CD4-positive, alpha-beta memory T cell (primary cell): ENCODE measurements at regions of chr16 and their contacts with region 1.

Region 1: GRCh38 chr16:88569985-88570690 is at the start of gene ZC3H18:
- DNase-seq: peak; percentile 93 to 96 (median 96)
- H3K4me3 ChIP-seq: peak within 1 kb of the TSS; percentile 54 to 84
- H3K4me3 Mint-ChIP-seq: peak within 1 kb of the TSS; percentile 85 to 91 (median 90)
- H3K27ac ChIP-seq: peak within 1 kb of the TSS; percentile 76
- H3K27ac Mint-ChIP-seq: peak within 1 kb of the TSS; percentile 87 to 95 (median 90)
- H3K4me1 ChIP-seq: peaks cover 24% of the 10 kb centered on the region
- H3K4me1 Mint-ChIP-seq: peaks cover 14 to 40% (median 26%) of the 10 kb centered on the region in 4 donors
- H3K27me3 ChIP-seq: no peaks in the 10 kb centered on the region
- H3K27me3 Mint-ChIP-seq: no peaks in the 10 kb centered on the region
- total RNA-seq, gene ZC3H18: 84.5 to 91.5 TPM

Region 2: GRCh38 chr16:87950765-87951549 is 619.2 kb before region 1 on chr16 and contains the start of gene BANP:
- CTCF ChIA-PET with region 1: no interaction called
- POLR2A ChIA-PET with region 1: no interaction called
- intact Hi-C with region 1: loop called (anchors 1 kb)
- DNase-seq: peak; percentile 98 to 99 (median 99)
- H3K4me3 ChIP-seq: peak within 1 kb of the TSS; percentile 89 to 90
- H3K4me3 Mint-ChIP-seq: peak within 1 kb of the TSS; percentile 97 to 100 (median 99)
- H3K27ac ChIP-seq: peak within 1 kb of the TSS; percentile 74
- H3K27ac Mint-ChIP-seq: peak within 1 kb of the TSS; percentile 98 to 100 (median 100)
- H3K4me1 ChIP-seq: peaks cover 43% of the 10 kb centered on the region
- H3K4me1 Mint-ChIP-seq: peaks cover 23 to 49% (median 39%) of the 10 kb centered on the region in 4 donors
- H3K27me3 ChIP-seq: no peaks in the 10 kb centered on the region
- H3K27me3 Mint-ChIP-seq: peaks cover 0 to 2% of the 10 kb centered on the region in 2 donors
- total RNA-seq, gene BANP: 61.8 to 72.7 TPM

Region 3: GRCh38 chr16:88461331-88462269 is 108.5 kb before region 1 on chr16:
- CTCF ChIA-PET with region 1: no interaction called
- POLR2A ChIA-PET with region 1: no interaction called
- intact Hi-C with region 1: no loop called
- DNase-seq: peak in 1 of 5 donors; percentile 15
- H3K4me3 ChIP-seq: no peak overlapping the region
- H3K4me3 Mint-ChIP-seq: peak overlapping the region in 3 of 8 donors; percentile 44 to 55 (median 46)
- H3K27ac ChIP-seq: no peak overlapping the region
- H3K27ac Mint-ChIP-seq: peak overlapping the region in 3 of 7 donors; percentile 37 to 83 (median 48)
- H3K4me1 ChIP-seq: peaks cover 91% of the 10 kb centered on the region
- H3K4me1 Mint-ChIP-seq: peaks cover 19 to 84% (median 52%) of the 10 kb centered on the region in 4 donors
- H3K27me3 ChIP-seq: no peaks in the 10 kb centered on the region
- H3K27me3 Mint-ChIP-seq: no peaks in the 10 kb centered on the region

Region 4: GRCh38 chr16:88582912-88583575 is 12.9 kb after region 1 on chr16:
- CTCF ChIA-PET with region 1: interaction called, 3 read pairs
- POLR2A ChIA-PET with region 1: interaction called, 11 read pairs
- intact Hi-C with region 1: no loop called
- DNase-seq: no peak
- H3K4me3 ChIP-seq: no peak overlapping the region
- H3K4me3 Mint-ChIP-seq: peak overlapping the region in 4 of 8 donors; percentile 10 to 59 (median 30)
- H3K27ac ChIP-seq: no peak overlapping the region
- H3K27ac Mint-ChIP-seq: peak overlapping the region in 2 of 7 donors; percentile 35 to 83
- H3K4me1 ChIP-seq: peaks cover 24% of the 10 kb centered on the region
- H3K4me1 Mint-ChIP-seq: peaks cover 17 to 76% (median 39%) of the 10 kb centered on the region in 4 donors
- H3K27me3 ChIP-seq: no peaks in the 10 kb centered on the region
- H3K27me3 Mint-ChIP-seq: no peaks in the 10 kb centered on the region

Region 5: DNA sequence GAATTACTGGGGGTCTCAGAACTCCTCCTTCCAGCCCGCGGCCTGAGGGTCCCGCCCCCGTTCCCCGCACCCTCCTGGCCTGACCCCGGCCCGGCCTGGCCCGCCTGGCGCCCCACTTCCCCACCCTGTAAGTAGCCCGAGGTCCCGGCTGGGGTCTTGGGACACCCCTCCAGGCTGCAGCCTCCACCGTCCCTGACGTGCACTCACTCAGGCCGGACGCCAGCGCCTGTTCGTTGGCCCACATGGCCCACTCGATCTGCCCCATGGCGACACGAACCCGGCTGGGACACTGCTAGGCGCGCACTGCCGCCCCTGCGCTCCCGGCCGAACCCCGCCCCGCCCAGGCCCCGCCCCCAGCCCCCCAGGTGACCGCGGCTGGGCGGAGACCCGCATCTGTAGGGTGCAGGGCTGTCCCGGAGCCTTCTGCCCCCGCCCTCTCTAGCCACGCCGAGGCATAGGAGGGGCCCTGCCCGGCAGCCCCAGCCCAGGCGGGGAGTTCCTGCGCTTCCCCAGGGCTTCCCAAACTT is 80.7 kb after region 1 on chr16 and contains the start of gene CYBA:
- CTCF ChIA-PET with region 1: no interaction called
- POLR2A ChIA-PET with region 1: interaction called, 8 read pairs
- intact Hi-C with region 1: loop called (anchors 1 kb)
- DNase-seq: peak; percentile 81 to 87 (median 84)
- H3K4me3 ChIP-seq: peak within 1 kb of the TSS; percentile 76 to 91
- H3K4me3 Mint-ChIP-seq: peak within 1 kb of the TSS; percentile 89 to 93 (median 91)
- H3K27ac ChIP-seq: peak within 1 kb of the TSS; percentile 91
- H3K27ac Mint-ChIP-seq: peak within 1 kb of the TSS; percentile 93 to 97 (median 95)
- H3K4me1 ChIP-seq: peaks cover 28% of the 10 kb centered on the region
- H3K4me1 Mint-ChIP-seq: peaks cover 7 to 26% (median 12%) of the 10 kb centered on the region in 4 donors
- H3K27me3 ChIP-seq: no peaks in the 10 kb centered on the region
- H3K27me3 Mint-ChIP-seq: no peaks in the 10 kb centered on the region
- total RNA-seq, gene CYBA: 383 to 386 TPM

Region 6: GRCh38 chr16:88662843-88663606 is 92.9 kb after region 1 on chr16 and contains the start of gene MVD:
- CTCF ChIA-PET with region 1: no interaction called
- POLR2A ChIA-PET with region 1: interaction called, 4 read pairs
- intact Hi-C with region 1: loop called (anchors 1 kb)
- DNase-seq: peak; percentile 93 to 96 (median 95)
- H3K4me3 ChIP-seq: peak within 1 kb of the TSS; percentile 65 to 95
- H3K4me3 Mint-ChIP-seq: peak within 1 kb of the TSS; percentile 91 to 95 (median 94)
- H3K27ac ChIP-seq: peak within 1 kb of the TSS; percentile 83
- H3K27ac Mint-ChIP-seq: peak within 1 kb of the TSS; percentile 80 to 98 (median 97)
- H3K4me1 ChIP-seq: peaks cover 16% of the 10 kb centered on the region
- H3K4me1 Mint-ChIP-seq: peaks cover 11 to 22% (median 15%) of the 10 kb centered on the region in 4 donors
- H3K27me3 ChIP-seq: no peaks in the 10 kb centered on the region
- H3K27me3 Mint-ChIP-seq: no peaks in the 10 kb centered on the region
- total RNA-seq, gene MVD: 49.2 to 57.0 TPM

Region 7: GRCh38 chr16:88706288-88706964 is 136.3 kb after region 1 on chr16 and contains the starts of genes CTU2 and RNF166:
- CTCF ChIA-PET with region 1: interaction called, 3 read pairs
- POLR2A ChIA-PET with region 1: interaction called, 25 read pairs
- intact Hi-C with region 1: loop called (anchors 1 kb)
- DNase-seq: peak; percentile 90 to 94 (median 91)
- H3K4me3 ChIP-seq: peak within 1 kb of the TSS; percentile 95 to 98
- H3K4me3 Mint-ChIP-seq: peak within 1 kb of the TSS; percentile 93 to 96 (median 96)
- H3K27ac ChIP-seq: peak within 1 kb of the TSS; percentile 85
- H3K27ac Mint-ChIP-seq: peak within 1 kb of the TSS; percentile 97 to 99 (median 98)
- H3K4me1 ChIP-seq: peaks cover 50% of the 10 kb centered on the region
- H3K4me1 Mint-ChIP-seq: peaks cover 20 to 62% (median 39%) of the 10 kb centered on the region in 4 donors
- H3K27me3 ChIP-seq: no peaks in the 10 kb centered on the region
- H3K27me3 Mint-ChIP-seq: no peaks in the 10 kb centered on the region
- total RNA-seq, gene CTU2: 20.4 to 21.1 TPM
- total RNA-seq, gene RNF166: 129 to 137 TPM

Region 8: DNA sequence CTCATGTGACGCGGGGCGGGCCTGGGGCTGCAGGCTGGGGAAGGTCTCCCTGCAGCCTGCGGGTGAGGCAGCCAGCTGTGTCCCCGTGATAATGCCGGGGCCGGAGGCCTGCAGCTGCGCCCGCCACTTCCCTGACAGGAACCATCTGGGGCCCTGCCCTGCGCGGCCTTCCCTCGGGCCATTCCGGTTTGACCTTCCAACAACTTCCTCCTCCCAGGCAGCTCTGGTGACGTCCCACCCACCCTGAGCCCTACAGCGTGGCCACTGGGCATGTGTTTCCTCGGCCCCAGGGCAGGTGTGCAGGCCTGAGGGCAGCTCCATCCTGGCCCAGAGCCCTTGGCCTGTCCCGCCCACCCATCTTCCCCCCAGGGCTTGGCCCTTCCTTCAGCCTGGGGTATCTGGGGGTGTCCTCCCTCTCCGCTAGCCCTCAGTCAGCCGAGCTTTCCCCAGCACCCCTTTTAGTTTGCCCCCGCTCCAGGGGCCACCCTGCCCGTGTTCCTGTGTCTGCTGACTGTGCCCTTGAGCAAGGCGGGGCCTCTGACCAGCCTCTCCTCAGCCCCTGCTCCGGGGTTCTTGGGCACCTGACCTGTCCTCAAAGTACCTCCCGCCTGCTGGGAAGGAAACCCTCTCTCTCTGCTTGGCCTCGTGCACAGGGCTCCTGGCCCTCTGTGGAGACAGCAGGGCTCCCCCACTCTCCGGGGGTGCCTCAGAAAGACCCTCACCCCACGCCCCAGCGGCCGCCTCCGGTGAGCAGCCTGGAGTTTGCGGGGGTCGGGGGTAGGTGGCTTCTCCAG is 407.1 kb after region 1 on chr16 and contains the start of gene CBFA2T3:
- CTCF ChIA-PET with region 1: no interaction called
- POLR2A ChIA-PET with region 1: no interaction called
- intact Hi-C with region 1: no loop called
- DNase-seq: no peak
- H3K4me3 ChIP-seq: no peak within 1 kb of the TSS
- H3K4me3 Mint-ChIP-seq: no peak within 1 kb of the TSS
- H3K27ac ChIP-seq: no peak within 1 kb of the TSS
- H3K27ac Mint-ChIP-seq: peak within 1 kb of the TSS in 1 of 7 donors; percentile 22
- H3K4me1 ChIP-seq: no peaks in the 10 kb centered on the region
- H3K4me1 Mint-ChIP-seq: peaks cover 0 to 5% (median 3%) of the 10 kb centered on the region in 4 donors
- H3K27me3 ChIP-seq: peaks cover 16% of the 10 kb centered on the region
- H3K27me3 Mint-ChIP-seq: peaks cover 15 to 21% of the 10 kb centered on the region in 2 donors
- total RNA-seq, gene CBFA2T3: 0.11 TPM in 1 of 2 experiments, not detected in the other

Region 9: GRCh38 chr16:89217388-89218191 is 647.5 kb after region 1 on chr16 and contains the start of gene ZNF778:
- CTCF ChIA-PET with region 1: no interaction called
- POLR2A ChIA-PET with region 1: interaction called, 7 read pairs
- intact Hi-C with region 1: loop called (anchors 1 kb)
- DNase-seq: peak; percentile 83 to 87 (median 85)
- H3K4me3 ChIP-seq: peak within 1 kb of the TSS; percentile 76 to 91
- H3K4me3 Mint-ChIP-seq: peak within 1 kb of the TSS; percentile 73 to 94 (median 92)
- H3K27ac ChIP-seq: peak within 1 kb of the TSS; percentile 94
- H3K27ac Mint-ChIP-seq: peak within 1 kb of the TSS; percentile 64 to 98 (median 92)
- H3K4me1 ChIP-seq: peaks cover 21% of the 10 kb centered on the region
- H3K4me1 Mint-ChIP-seq: peaks cover 10 to 37% (median 26%) of the 10 kb centered on the region in 4 donors
- H3K27me3 ChIP-seq: no peaks in the 10 kb centered on the region
- H3K27me3 Mint-ChIP-seq: no peaks in the 10 kb centered on the region
- total RNA-seq, gene ZNF778: 13.1 to 15.9 TPM